Activated CD4-positive, alpha-beta memory T cell treated with anti-CD3 and anti-CD28 coated beads for 36 hours (primary cell): ENCODE measurements at regions of chr1 and their contacts with region 1.

Region 1: GRCh38 chr1:242467556-242468145 is 56.8 kb downstream of the PLD5 start:
- DNase-seq: peak; percentile 25
- H3K4me3 Mint-ChIP-seq: no peak overlapping the region
- H3K27ac Mint-ChIP-seq: no peak overlapping the region
- H3K4me1 Mint-ChIP-seq: no peaks in the 10 kb centered on the region
- H3K27me3 Mint-ChIP-seq: peaks cover 8% of the 10 kb centered on the region

Region 2: DNA sequence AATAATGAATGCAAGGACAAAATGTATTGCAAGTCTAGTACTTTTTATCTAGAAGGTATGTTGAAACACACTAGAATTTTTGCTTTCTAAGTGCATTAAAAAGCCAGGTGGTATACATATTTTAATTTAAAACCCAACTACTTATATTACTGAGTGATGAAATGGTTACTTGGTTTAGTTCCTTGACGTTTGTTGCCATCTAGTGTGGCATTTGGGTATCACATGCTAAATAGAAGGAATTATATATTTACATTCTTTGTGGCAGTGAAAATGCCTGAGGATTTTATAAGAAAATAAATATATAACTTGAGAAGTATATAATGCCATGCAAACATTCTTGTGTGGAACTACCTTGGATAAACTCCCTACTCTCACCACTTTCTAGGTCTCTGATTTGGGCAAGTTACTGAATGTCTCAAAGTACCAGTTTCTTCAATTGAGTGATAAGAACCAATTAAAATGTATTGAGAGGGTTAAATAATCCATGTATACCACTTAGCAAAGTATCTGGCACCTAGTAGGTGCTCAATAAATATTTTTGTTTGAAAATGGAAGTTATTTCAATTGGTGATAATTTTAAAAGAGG is 857.7 kb after region 1 on chr1:
- CTCF ChIA-PET with region 1: interaction called, 3 read pairs
- POLR2A ChIA-PET with region 1: no interaction called
- intact Hi-C with region 1: loop called (anchors 2 kb)
- DNase-seq: no peak
- H3K4me3 Mint-ChIP-seq: no peak overlapping the region
- H3K27ac Mint-ChIP-seq: no peak overlapping the region
- H3K4me1 Mint-ChIP-seq: no peaks in the 10 kb centered on the region
- H3K27me3 Mint-ChIP-seq: no peaks in the 10 kb centered on the region